ENCODE measurements at regions of chr1 and their contacts with region 1.

Region 1: DNA sequence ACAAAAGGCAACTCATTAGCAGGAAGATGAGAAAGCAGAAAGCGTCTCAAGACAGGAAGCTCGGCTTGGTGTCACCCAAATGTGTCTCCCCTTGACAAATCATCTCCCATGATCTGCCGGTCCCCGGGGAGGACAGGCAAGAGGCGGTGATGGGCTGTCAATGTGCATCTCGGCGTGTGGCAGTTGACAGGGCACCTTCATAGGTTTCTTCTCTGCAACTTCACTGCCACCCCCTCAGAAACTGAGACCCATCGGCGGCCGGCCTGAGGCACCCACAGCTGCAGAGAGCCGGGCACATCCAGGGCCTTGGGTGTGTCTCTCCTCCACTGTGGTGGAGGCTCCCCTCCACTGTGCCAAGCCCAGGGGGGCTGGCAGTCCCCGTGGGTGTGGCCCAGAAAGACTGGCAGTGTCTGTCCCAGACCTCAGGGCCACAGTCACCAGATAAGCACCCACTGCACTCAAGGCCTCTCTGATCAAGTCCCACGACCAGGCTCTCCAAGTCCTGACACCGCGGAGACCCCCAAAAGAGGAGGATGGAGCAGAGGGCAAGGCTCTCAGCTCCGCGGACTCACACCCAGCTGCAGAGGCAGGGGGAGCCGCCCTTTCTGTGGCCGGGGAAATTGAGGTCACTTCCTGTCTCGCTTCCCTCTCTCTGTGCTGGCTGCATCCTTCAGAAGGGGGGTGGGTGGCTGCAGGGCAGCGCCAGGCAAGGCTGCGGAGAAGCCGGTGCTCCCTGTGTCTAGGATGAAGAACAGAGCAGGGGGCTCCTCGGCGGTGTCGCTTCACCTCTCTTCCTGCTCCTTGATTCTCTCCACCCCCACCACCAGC is 39.6 kb upstream of the LBR start:
- DNase-seq: peak; percentile 67 to 93 (median 86)
- ATAC-seq: peak; percentile 81
- H3K4me3 ChIP-seq: peak overlapping the region; percentile 60 to 86
- H3K4me3 Mint-ChIP-seq: peak overlapping the region; percentile 92
- H3K27ac ChIP-seq: peak overlapping the region; percentile 88 to 95
- H3K27ac Mint-ChIP-seq: peak overlapping the region; percentile 98
- H3K4me1 ChIP-seq: peaks cover 35% of the 10 kb centered on the region
- H3K4me1 Mint-ChIP-seq: peaks cover 43% of the 10 kb centered on the region
- H3K27me3 ChIP-seq: no peaks in the 10 kb centered on the region
- H3K27me3 Mint-ChIP-seq: no peaks in the 10 kb centered on the region
- CTCF ChIP-seq: no peak

Region 2: GRCh38 chr1:225428068-225428880 is 39.1 kb before region 1 on chr1:
- CTCF ChIA-PET with region 1: interaction called, 7 read pairs
- POLR2A ChIA-PET with region 1: interaction called, 49 read pairs
- intact Hi-C with region 1: loop called (anchors 1 kb)
- DNase-seq: peak; percentile 80 to 96 (median 91)
- ATAC-seq: peak; percentile 92
- H3K4me3 ChIP-seq: peak overlapping the region; percentile 80 to 89
- H3K4me3 Mint-ChIP-seq: peak overlapping the region; percentile 93
- H3K27ac ChIP-seq: peak overlapping the region; percentile 69 to 70
- H3K27ac Mint-ChIP-seq: peak overlapping the region; percentile 91
- H3K4me1 ChIP-seq: peaks cover 39% of the 10 kb centered on the region
- H3K4me1 Mint-ChIP-seq: peaks cover 44% of the 10 kb centered on the region
- H3K27me3 ChIP-seq: no peaks in the 10 kb centered on the region
- H3K27me3 Mint-ChIP-seq: no peaks in the 10 kb centered on the region
- CTCF ChIP-seq: no peak

Region 3: GRCh38 chr1:225441314-225442122 is 25.9 kb before region 1 on chr1:
- CTCF ChIA-PET with region 1: interaction called, 3 read pairs
- POLR2A ChIA-PET with region 1: interaction called, 70 read pairs
- intact Hi-C with region 1: loop called (anchors 1 kb)
- DNase-seq: no peak
- ATAC-seq: no peak
- H3K4me3 ChIP-seq: peak overlapping the region in 1 of 2 experiments; percentile 14
- H3K4me3 Mint-ChIP-seq: peak overlapping the region; percentile 61
- H3K27ac ChIP-seq: peak overlapping the region in 1 of 2 experiments; percentile 51
- H3K27ac Mint-ChIP-seq: peak overlapping the region; percentile 79
- H3K4me1 ChIP-seq: peaks cover 51% of the 10 kb centered on the region
- H3K4me1 Mint-ChIP-seq: peaks cover 53% of the 10 kb centered on the region
- H3K27me3 ChIP-seq: no peaks in the 10 kb centered on the region
- H3K27me3 Mint-ChIP-seq: no peaks in the 10 kb centered on the region
- CTCF ChIP-seq: no peak

Region 4: GRCh38 chr1:225484657-225485214 is 17.3 kb after region 1 on chr1:
- CTCF ChIA-PET with region 1: no interaction called
- POLR2A ChIA-PET with region 1: no interaction called
- intact Hi-C with region 1: no loop called
- DNase-seq: no peak
- ATAC-seq: no peak
- H3K4me3 ChIP-seq: no peak overlapping the region
- H3K4me3 Mint-ChIP-seq: no peak overlapping the region
- H3K27ac ChIP-seq: no peak overlapping the region
- H3K27ac Mint-ChIP-seq: no peak overlapping the region
- H3K4me1 ChIP-seq: no peaks in the 10 kb centered on the region
- H3K4me1 Mint-ChIP-seq: no peaks in the 10 kb centered on the region
- H3K27me3 ChIP-seq: no peaks in the 10 kb centered on the region
- H3K27me3 Mint-ChIP-seq: peaks cover 2% of the 10 kb centered on the region
- CTCF ChIP-seq: no peak

Region 5: DNA sequence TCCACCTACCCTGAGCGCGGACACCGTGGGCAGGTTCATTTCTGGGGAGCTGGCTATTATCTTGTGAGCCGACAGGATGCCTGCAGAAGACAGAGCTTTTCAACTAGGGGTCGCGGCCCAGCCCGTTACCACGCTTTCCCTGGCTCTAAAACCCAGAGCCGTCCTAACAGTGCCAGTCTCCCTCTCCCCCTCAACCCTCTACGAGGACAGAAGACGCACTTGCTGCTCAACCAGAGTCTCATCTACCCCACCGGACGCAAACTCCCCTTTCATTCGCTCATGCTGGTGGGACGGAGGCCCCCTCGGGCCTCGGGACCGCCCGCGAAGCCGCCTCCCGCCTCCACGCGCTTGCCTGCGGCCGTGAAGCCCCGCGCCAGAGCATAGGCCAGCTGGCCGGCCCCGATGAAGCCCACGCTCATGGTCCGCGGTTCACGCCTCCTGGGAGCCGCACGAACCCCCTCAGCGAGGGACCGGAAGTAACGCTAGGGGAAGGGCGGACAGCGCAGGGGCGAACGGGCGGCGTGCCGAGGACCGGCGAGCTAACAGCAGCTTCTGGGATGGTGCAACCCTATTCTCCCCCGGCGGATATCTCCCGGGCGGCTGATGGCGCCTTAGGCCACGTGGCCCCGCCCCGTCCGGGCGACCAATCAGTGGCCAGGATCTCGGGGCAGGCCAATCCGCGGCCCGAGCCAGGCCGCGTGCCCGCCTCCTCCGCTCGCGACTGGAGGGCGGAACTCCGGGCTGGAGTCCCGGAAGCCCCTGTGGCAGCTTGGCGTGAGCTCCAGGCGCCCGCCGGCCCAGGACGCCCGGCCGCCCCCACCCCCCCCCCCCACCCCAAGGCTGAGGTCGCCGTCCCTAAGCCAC is 456.5 kb after region 1 on chr1 and contains the start of gene PYCR2:
- CTCF ChIA-PET with region 1: no interaction called
- POLR2A ChIA-PET with region 1: interaction called, 12 read pairs
- intact Hi-C with region 1: loop called (anchors 1 kb)
- DNase-seq: peak; percentile 90 to 98 (median 92)
- ATAC-seq: peak; percentile 98
- H3K4me3 ChIP-seq: peak within 1 kb of the TSS; percentile 75 to 79
- H3K4me3 Mint-ChIP-seq: peak within 1 kb of the TSS; percentile 94
- H3K27ac ChIP-seq: peak within 1 kb of the TSS; percentile 75 to 91
- H3K27ac Mint-ChIP-seq: peak within 1 kb of the TSS; percentile 93
- H3K4me1 ChIP-seq: peaks cover 75% of the 10 kb centered on the region
- H3K4me1 Mint-ChIP-seq: peaks cover 63% of the 10 kb centered on the region
- H3K27me3 ChIP-seq: no peaks in the 10 kb centered on the region
- H3K27me3 Mint-ChIP-seq: no peaks in the 10 kb centered on the region
- CTCF ChIP-seq: no peak
- total RNA-seq, gene PYCR2: 27.3 to 30.6 TPM

Region 6: GRCh38 chr1:226186124-226187018 is 719.0 kb after region 1 on chr1 and contains the start of gene ACBD3:
- CTCF ChIA-PET with region 1: no interaction called
- POLR2A ChIA-PET with region 1: no interaction called
- intact Hi-C with region 1: loop called (anchors 1 to 5 kb)
- DNase-seq: peak; percentile 67 to 95 (median 87)
- ATAC-seq: peak; percentile 97
- H3K4me3 ChIP-seq: peak within 1 kb of the TSS; percentile 82 to 90
- H3K4me3 Mint-ChIP-seq: peak within 1 kb of the TSS; percentile 92
- H3K27ac ChIP-seq: peak within 1 kb of the TSS; percentile 72 to 88
- H3K27ac Mint-ChIP-seq: peak within 1 kb of the TSS; percentile 95
- H3K4me1 ChIP-seq: peaks cover 41% of the 10 kb centered on the region
- H3K4me1 Mint-ChIP-seq: peaks cover 40% of the 10 kb centered on the region
- H3K27me3 ChIP-seq: no peaks in the 10 kb centered on the region
- H3K27me3 Mint-ChIP-seq: no peaks in the 10 kb centered on the region
- CTCF ChIP-seq: no peak
- total RNA-seq, gene ACBD3: 40.9 to 41.4 TPM

Measured in CD8-positive, alpha-beta T cell (primary cell).